ENCODE measurements at regions of chr19 and their contacts with region 1.

Region 1: GRCh38 chr19:6801485-6802086 is 29.1 kb downstream of the VAV1 start:
- DNase-seq: peak; percentile 90
- H3K4me3 Mint-ChIP-seq: peak overlapping the region; percentile 69
- H3K27ac Mint-ChIP-seq: peak overlapping the region; percentile 89
- H3K4me1 Mint-ChIP-seq: peaks cover 65% of the 10 kb centered on the region
- H3K27me3 Mint-ChIP-seq: no peaks in the 10 kb centered on the region

Region 2: DNA sequence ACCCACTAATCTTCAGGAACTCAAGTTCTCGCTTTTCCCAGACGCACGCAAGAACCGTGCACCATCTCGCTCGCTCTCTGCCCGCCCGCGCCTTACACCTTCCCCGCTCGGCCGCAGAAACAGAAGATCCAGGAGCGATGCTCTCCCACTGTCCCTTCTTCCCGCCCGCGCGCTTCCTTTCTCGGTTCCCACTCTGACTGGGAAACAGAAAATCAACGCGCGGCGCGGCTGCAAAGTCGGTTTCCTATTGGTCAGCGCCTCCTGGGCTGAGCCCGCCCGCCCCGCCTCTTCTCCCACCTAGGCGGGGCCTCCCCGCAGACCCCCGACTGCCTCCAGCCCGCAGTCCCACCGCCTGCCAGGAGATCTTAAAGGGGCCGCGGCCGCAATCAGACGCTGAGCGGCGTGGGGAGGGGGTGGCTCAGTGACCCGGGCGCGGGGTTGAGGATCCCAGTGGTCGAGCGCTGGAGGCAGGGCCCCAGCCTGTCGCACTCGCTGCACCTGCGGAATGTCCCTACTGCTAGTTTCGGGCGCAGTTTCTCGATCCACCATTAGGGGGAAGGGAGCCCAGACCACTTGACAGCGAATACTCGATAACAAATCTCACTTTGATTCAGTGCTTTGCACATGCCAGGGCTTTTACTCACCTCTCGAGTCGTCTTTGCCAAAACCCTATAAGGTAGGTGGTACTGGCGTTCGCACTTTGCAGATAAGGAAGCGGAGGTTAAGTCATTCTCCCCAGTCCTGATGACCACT is 341.3 kb before region 1 on chr19:
- CTCF ChIA-PET with region 1: no interaction called
- intact Hi-C with region 1: loop called (anchors 5 kb)
- DNase-seq: peak; percentile 98
- H3K4me3 Mint-ChIP-seq: peak overlapping the region; percentile 90
- H3K27ac Mint-ChIP-seq: peak overlapping the region; percentile 78
- H3K4me1 Mint-ChIP-seq: peaks cover 22% of the 10 kb centered on the region
- H3K27me3 Mint-ChIP-seq: no peaks in the 10 kb centered on the region

Region 3: DNA sequence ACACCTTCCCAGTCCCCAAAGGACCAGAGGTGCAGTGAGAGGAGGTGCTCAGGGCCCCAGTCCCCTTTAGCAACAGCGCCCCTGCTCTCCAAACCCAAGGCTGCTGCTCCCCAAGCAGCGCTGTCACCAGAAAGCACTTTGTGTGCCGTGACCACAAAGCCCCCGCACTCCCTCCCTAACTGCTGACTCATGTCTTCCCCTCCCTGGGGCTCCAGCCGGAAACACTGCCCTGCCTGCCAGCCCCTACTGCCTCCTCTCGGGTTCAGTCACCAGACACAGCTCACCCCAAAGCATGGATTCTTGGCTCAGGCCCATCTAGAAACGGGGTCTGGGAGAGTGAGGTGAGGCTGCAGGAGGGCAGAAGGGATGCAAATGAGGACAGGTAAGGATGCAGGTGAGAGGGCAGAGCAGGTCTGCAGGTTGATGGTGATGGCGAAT is 126.7 kb before region 1 on chr19:
- CTCF ChIA-PET with region 1: no interaction called
- intact Hi-C with region 1: loop called (anchors 2 kb)
- DNase-seq: peak; percentile 97
- H3K4me3 Mint-ChIP-seq: peak overlapping the region; percentile 34
- H3K27ac Mint-ChIP-seq: peak overlapping the region; percentile 77
- H3K4me1 Mint-ChIP-seq: peaks cover 78% of the 10 kb centered on the region
- H3K27me3 Mint-ChIP-seq: no peaks in the 10 kb centered on the region

Region 4: DNA sequence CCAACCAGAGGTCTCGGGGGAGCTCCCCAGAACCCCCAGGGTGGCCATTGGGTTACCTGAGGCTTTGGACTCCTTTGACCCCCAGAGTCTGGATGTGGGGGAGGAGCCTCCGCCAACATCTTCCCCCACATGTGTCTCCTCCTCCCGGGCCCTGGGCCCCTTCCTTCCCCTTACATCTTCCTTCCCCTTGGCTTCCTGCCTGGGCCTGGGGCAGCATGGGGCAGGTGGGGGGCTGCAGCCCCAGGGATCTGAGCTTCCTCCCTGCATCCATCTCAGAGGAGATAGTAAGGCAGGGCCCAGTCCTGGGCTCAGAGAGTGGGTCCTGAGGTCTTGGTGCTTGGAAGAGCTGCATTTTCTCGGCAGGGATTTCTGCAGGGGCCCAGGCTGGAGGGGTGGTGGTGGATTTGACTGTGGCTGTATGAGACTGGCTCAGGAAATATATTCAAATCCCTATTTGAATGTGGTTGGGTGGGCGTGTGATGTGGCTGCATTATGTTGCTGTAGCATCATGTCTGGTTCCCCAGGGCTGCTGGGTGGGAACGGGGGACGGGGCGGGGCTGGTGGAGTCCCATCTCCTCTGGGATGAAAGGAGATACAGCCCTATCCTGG is 28.2 kb before region 1 on chr19:
- CTCF ChIA-PET with region 1: interaction called, 7 read pairs
- intact Hi-C with region 1: loop called (anchors 1 kb)
- DNase-seq: peak; percentile 76
- H3K4me3 Mint-ChIP-seq: peak overlapping the region; percentile 98
- H3K27ac Mint-ChIP-seq: peak overlapping the region; percentile 97
- H3K4me1 Mint-ChIP-seq: peaks cover 57% of the 10 kb centered on the region
- H3K27me3 Mint-ChIP-seq: no peaks in the 10 kb centered on the region

Region 5: GRCh38 chr19:6891761-6892385 is 90.3 kb after region 1 on chr19:
- CTCF ChIA-PET with region 1: no interaction called
- intact Hi-C with region 1: no loop called
- DNase-seq: peak; percentile 22
- H3K4me3 Mint-ChIP-seq: peak overlapping the region; percentile 63
- H3K27ac Mint-ChIP-seq: peak overlapping the region; percentile 93
- H3K4me1 Mint-ChIP-seq: peaks cover 68% of the 10 kb centered on the region
- H3K27me3 Mint-ChIP-seq: no peaks in the 10 kb centered on the region

Region 6: GRCh38 chr19:6906559-6907060 is 105.0 kb after region 1 on chr19:
- CTCF ChIA-PET with region 1: no interaction called
- intact Hi-C with region 1: no loop called
- DNase-seq: no peak
- H3K4me3 Mint-ChIP-seq: no peak overlapping the region
- H3K27ac Mint-ChIP-seq: no peak overlapping the region
- H3K4me1 Mint-ChIP-seq: no peaks in the 10 kb centered on the region
- H3K27me3 Mint-ChIP-seq: no peaks in the 10 kb centered on the region

Region 7: DNA sequence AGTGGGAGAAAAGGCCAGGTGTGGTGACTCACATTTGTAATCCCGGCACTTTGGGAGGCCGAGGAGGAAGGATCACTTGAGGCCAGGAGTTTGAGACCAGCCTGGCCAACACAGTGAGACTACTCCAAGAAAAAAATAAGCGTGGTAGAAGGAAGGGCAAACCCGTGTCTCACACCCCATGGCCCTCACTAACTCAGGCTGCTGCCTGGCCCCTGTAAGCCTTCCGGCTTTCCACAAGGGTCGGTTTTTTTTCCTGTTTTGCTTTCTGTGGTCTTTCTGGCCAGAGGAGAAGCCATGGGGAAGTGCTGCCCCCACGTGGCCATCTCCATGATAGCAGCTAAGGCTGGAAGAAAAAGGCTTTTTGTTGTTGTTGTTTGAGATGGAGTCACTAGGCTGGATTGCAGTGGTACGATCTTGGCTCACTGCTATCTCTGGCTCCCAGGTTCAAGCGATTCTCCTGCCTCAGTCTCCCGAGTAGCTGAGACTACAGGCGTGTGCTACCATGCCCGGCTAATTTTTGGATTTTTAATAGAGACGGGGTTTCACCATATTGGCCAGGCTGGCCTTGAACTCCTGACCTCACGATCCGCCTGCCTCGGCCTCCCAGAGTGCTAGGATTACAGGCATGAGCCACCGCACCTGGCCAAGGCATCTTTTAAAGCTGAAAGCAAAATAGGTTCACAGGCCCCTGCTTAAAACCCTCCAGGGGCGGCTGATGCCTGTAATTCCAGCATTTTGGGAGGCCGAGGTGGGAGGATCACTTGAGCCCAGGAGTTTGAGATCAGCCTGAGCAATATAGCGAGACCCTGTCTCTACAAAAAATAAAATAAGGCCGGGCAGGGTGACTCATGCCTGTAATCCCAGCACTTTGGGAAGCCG is 539.6 kb after region 1 on chr19:
- CTCF ChIA-PET with region 1: no interaction called
- intact Hi-C with region 1: loop called (anchors 10 kb)
- DNase-seq: peak; percentile 92
- H3K4me3 Mint-ChIP-seq: peak overlapping the region; percentile 39
- H3K27ac Mint-ChIP-seq: no peak overlapping the region
- H3K4me1 Mint-ChIP-seq: peaks cover 42% of the 10 kb centered on the region
- H3K27me3 Mint-ChIP-seq: no peaks in the 10 kb centered on the region

Measured in activated naive CD4-positive, alpha-beta T cell treated with anti-CD3 and anti-CD28 coated beads for 36 hours (primary cell).